ENCODE measurements at regions of chr5 and their contacts with region 1.

Region 1: GRCh38 chr5:142655339-142656267 is 30.3 kb downstream of the FGF1 start:
- DNase-seq: no peak
- H3K4me3 ChIP-seq: no peak overlapping the region
- CTCF ChIP-seq: peak; percentile 99

Region 2: GRCh38 chr5:142611154-142611553 is 44.4 kb before region 1 on chr5:
- CTCF ChIA-PET with region 1: interaction called, 208 read pairs
- POLR2A ChIA-PET with region 1: no interaction called
- DNase-seq: no peak
- H3K4me3 ChIP-seq: no peak overlapping the region
- CTCF ChIP-seq: peak; percentile 94

Region 3: GRCh38 chr5:142627383-142628255 is 28.0 kb before region 1 on chr5:
- CTCF ChIA-PET with region 1: interaction called, 35 read pairs
- POLR2A ChIA-PET with region 1: no interaction called
- DNase-seq: no peak
- H3K4me3 ChIP-seq: no peak overlapping the region
- CTCF ChIP-seq: no peak

Region 4: GRCh38 chr5:142644640-142645361 is 10.8 kb before region 1 on chr5:
- CTCF ChIA-PET with region 1: interaction called, 117 read pairs
- POLR2A ChIA-PET with region 1: interaction called, 5 read pairs
- DNase-seq: peak; percentile 99
- H3K4me3 ChIP-seq: peak overlapping the region; percentile 42
- CTCF ChIP-seq: no peak

Region 5: GRCh38 chr5:142685418-142686209 is 30.0 kb after region 1 on chr5 and contains the start of gene FGF1:
- CTCF ChIA-PET with region 1: interaction called, 482 read pairs
- POLR2A ChIA-PET with region 1: no interaction called
- DNase-seq: no peak
- H3K4me3 ChIP-seq: no peak within 1 kb of the TSS
- CTCF ChIP-seq: no peak

Region 6: DNA sequence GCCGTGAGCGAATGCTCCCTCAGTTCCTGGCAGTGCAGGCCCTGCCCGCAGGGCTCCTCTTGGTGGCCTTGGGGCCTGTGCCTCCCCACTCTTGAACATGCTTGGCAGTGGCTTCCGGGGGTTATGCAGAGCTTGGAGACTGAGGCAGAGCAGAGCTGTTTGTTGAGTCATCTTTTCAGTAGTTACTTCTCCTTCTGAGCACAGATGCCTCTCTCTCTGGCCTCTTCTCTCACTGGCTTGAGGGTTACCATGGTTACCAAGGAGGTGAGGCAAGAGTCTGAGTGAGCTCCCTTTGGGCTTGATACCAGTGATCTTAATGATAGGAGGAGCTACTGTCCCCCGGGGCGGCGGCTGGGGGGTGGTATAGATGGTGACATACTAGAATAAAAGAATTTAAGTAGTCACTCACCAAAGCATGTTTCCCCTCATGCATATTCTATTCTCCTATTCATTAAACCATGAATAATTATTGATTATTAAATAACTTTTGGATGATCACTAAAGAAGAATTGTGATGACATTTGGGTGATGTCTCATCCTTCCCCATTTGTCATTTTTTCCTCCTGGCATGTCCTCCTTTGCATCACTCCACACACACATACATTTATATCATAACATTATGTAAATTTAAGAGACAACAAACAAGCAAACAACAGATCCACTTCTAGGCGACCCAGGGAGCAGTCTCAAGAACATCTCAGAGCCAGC is 225.6 kb after region 1 on chr5:
- CTCF ChIA-PET with region 1: interaction called, 17 read pairs
- POLR2A ChIA-PET with region 1: no interaction called
- DNase-seq: peak; percentile 65
- H3K4me3 ChIP-seq: no peak overlapping the region
- CTCF ChIP-seq: no peak

Measured in AG04449 (cell line).